PC-3 (cell line): ENCODE measurements at regions of chr5 and their contacts with region 1.

Region 1: GRCh38 chr5:29800752-29801151 is 1392.7 kb upstream of the CDH6 start:
- DNase-seq: no peak
- ATAC-seq: no peak
- H3K4me3 ChIP-seq: no peak overlapping the region
- H3K27ac ChIP-seq: no peak overlapping the region
- H3K4me1 ChIP-seq: no peaks in the 10 kb centered on the region
- H3K27me3 ChIP-seq: no peaks in the 10 kb centered on the region
- CTCF ChIP-seq: no peak

Region 2: GRCh38 chr5:29229461-29229860 is 571.3 kb before region 1 on chr5:
- CTCF ChIA-PET with region 1: no interaction called
- POLR2A ChIA-PET with region 1: no interaction called
- intact Hi-C with region 1: loop called (anchors 10 kb)
- DNase-seq: no peak
- ATAC-seq: no peak
- H3K4me3 ChIP-seq: no peak overlapping the region
- H3K27ac ChIP-seq: no peak overlapping the region
- H3K4me1 ChIP-seq: no peaks in the 10 kb centered on the region
- H3K27me3 ChIP-seq: no peaks in the 10 kb centered on the region
- CTCF ChIP-seq: no peak

Region 3: DNA sequence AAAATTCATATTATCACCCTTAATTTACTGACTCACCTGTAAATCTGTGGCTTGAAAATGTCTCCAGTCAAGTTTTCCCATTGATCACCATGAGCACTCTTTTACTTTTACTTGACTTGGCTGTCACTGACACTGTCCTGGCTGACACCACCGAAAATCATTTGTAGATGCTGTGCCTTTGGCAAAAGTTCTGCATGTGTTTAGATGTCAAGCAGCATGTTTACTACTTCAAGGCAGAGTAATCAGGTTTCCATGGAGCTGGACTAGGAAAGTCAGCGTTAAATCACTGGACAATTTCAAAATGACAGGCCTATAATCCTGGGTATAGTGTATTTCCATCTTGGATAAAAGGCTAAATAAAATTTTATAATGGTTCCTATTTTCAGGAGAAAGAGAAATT is 137.9 kb before region 1 on chr5:
- CTCF ChIA-PET with region 1: no interaction called
- POLR2A ChIA-PET with region 1: no interaction called
- intact Hi-C with region 1: no loop called
- DNase-seq: no peak
- ATAC-seq: no peak
- H3K4me3 ChIP-seq: no peak overlapping the region
- H3K27ac ChIP-seq: no peak overlapping the region
- H3K4me1 ChIP-seq: no peaks in the 10 kb centered on the region
- H3K27me3 ChIP-seq: no peaks in the 10 kb centered on the region
- CTCF ChIP-seq: no peak

Region 4: DNA sequence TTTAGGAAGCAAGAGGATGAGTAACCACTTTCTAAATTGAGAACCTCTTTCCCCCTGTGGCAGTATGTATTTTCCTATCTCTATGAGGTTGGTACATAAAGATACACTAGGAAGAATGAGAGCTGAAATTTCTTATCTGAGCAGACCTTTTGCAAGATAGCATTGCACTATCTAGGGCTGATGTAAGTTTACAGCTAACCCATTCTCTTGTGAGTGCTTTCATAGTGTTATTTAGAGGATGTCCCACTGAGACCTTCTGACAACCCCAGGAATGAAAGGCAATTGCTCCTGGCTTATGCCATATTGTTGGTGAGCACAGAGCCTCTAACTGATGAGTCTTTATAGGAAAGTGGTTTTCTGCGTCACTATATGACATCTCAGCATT is 183.4 kb after region 1 on chr5:
- CTCF ChIA-PET with region 1: no interaction called
- POLR2A ChIA-PET with region 1: no interaction called
- intact Hi-C with region 1: no loop called
- DNase-seq: no peak
- ATAC-seq: no peak
- H3K4me3 ChIP-seq: no peak overlapping the region
- H3K27ac ChIP-seq: no peak overlapping the region
- H3K4me1 ChIP-seq: no peaks in the 10 kb centered on the region
- H3K27me3 ChIP-seq: no peaks in the 10 kb centered on the region
- CTCF ChIP-seq: no peak